K562 (cell line): ENCODE measurements at regions of chr11 and their contacts with region 1.

Region 1: GRCh38 chr11:67583247-67584204 is at the start of gene GSTP1:
- DNase-seq: peak; percentile 94 to 96 (median 94)
- ATAC-seq: peak; percentile 95
- H3K4me3 ChIP-seq: peak within 1 kb of the TSS; percentile 62
- H3K27ac ChIP-seq: peak within 1 kb of the TSS; percentile 89
- H3K4me1 ChIP-seq: peaks cover 33 to 49% of the 10 kb centered on the region in 2 experiments
- H3K27me3 ChIP-seq: no peaks in the 10 kb centered on the region
- CTCF ChIP-seq: peak; percentile 88 to 90 (median 89)
- EP300 ChIP-seq: no peak
- POLR2A ChIP-seq: peak; percentile 95
- RAD21 ChIP-seq: peak; percentile 68 to 70
- polyA plus RNA-seq, gene GSTP1: 739 to 1,204 TPM

Region 2: DNA sequence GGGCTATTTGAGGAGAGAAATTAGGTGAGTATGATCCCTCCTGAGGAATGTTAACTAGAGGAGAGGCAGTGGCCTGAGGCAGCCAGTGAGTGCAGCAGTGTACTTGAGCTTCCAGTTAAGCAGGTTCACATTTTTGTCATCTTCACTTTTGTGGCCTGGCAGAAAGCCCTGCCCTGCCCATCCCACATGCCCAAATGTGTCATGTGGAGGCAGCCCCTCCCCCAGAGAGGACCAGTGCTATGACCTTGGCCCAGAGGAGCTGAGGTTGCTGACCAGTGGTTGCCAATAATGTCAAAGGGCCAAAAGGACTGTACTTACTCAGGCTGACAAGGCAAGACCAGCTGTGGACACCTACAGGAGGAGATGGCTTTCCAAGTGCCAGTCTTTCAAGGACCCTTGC is 334.9 kb before region 1 on chr11:
- CTCF ChIA-PET with region 1: no interaction called
- POLR2A ChIA-PET with region 1: no interaction called
- in situ Hi-C with region 1: no loop called
- intact Hi-C with region 1: no loop called
- DNase-seq: no peak
- ATAC-seq: no peak
- H3K4me3 ChIP-seq: no peak overlapping the region
- H3K27ac ChIP-seq: no peak overlapping the region
- H3K4me1 ChIP-seq: peaks cover 0 to 7% of the 10 kb centered on the region in 2 experiments; a peak in 1 of 5 replicates
- H3K27me3 ChIP-seq: no peaks in the 10 kb centered on the region
- CTCF ChIP-seq: no peak
- EP300 ChIP-seq: no peak
- POLR2A ChIP-seq: no peak
- RAD21 ChIP-seq: no peak

Region 3: DNA sequence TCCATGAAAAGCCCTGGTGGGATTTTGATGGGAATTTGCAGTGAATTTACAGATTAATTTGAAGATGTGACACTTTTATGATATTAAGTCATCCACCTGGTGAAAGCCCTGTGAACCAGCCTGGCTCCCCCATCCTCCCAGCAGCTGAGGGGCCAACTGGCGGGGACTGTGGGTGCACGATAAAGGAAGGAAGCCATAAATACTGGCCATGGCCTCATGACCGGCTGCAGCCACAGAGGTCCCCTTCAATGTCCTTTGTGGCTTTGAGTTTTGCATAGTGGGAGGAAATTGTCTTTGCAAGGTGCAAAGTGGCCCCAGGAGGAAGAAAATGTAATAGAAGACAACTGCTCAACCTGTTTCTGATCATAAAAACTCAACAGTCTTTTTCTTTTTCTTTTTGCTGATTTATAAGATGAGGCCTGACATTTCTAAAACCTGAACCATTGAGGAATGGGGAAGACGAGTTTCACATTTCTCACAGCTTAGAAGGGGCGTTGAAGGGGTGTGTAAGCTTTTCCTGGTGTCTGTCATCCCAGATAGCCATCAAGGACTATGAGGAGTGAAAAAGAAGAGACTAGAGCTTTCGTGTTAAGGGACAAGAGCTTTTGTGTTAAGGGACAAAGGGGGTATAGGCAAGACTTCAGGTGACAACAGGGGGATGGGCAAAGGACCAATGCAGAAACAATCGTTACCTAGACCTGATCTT is 17.0 kb after region 1 on chr11:
- CTCF ChIA-PET with region 1: no interaction called
- POLR2A ChIA-PET with region 1: interaction called, 15 read pairs
- in situ Hi-C with region 1: no loop called
- intact Hi-C with region 1: loop called (anchors 1 kb)
- DNase-seq: peak in 2 of 4 experiments; percentile 65 to 89
- ATAC-seq: peak; percentile 89
- H3K4me3 ChIP-seq: no peak overlapping the region
- H3K27ac ChIP-seq: peak overlapping the region; percentile 59
- H3K4me1 ChIP-seq: peaks cover 45% of the 10 kb centered on the region in 2 experiments
- H3K27me3 ChIP-seq: no peaks in the 10 kb centered on the region
- CTCF ChIP-seq: no peak
- EP300 ChIP-seq: peak; percentile 85
- POLR2A ChIP-seq: no peak
- RAD21 ChIP-seq: 0 out of 4 replicates have a peak, but pooled peaks have one; percentile 20 to 30

Region 4: DNA sequence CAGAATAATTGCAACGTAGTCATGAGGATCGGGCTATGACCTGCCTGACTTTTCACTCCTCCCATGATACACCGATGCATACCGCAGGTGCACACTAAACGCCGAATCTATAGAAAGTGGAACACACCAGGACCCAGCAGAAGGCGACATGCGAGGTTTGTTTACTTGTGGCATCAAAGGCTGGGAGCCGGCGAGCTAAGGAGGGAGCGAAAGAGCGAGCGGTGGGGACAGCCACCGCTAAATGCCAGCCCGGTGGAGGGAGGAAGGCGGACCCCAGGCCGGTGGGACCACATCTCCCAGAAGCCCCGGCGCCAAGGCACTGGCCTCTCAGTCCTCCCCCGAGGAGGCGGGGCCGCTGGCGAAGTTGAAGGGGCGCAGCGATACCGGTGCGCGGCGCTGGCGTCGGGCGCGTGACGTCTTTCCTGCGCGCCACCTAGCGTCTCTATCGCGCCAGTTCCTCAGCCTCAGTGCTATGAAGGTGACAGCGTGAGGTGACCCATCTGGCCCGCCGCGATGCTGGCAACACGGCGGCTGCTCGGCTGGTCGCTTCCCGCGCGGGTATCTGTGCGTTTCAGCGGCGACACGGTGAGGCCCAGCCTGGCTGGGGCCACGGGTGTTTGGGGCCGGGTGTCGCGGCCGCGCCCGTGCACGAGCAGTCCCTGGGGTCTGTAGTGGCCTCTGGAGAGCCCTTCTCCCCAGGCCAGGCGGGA is 23.1 kb after region 1 on chr11 and contains the start of gene NDUFV1:
- CTCF ChIA-PET with region 1: interaction called, 3 read pairs
- POLR2A ChIA-PET with region 1: interaction called, 15 read pairs
- in situ Hi-C with region 1: no loop called
- intact Hi-C with region 1: loop called (anchors 1 kb)
- DNase-seq: peak; percentile 88 to 98 (median 92)
- ATAC-seq: peak; percentile 97
- H3K4me3 ChIP-seq: peak within 1 kb of the TSS; percentile 99
- H3K27ac ChIP-seq: peak within 1 kb of the TSS; percentile 83
- H3K4me1 ChIP-seq: peaks cover 28 to 63% of the 10 kb centered on the region in 2 experiments
- H3K27me3 ChIP-seq: no peaks in the 10 kb centered on the region
- CTCF ChIP-seq: peak; percentile 61 to 95 (median 78)
- EP300 ChIP-seq: peak; percentile 40; the same call in 1 of the 2 replicates
- POLR2A ChIP-seq: peak; percentile 89
- RAD21 ChIP-seq: peak; percentile 25 to 28; a peak in 1 of 4 replicates
- polyA plus RNA-seq, gene NDUFV1: 10.8 to 32.9 TPM

Region 5: GRCh38 chr11:67820081-67820480 is 236.6 kb after region 1 on chr11:
- CTCF ChIA-PET with region 1: no interaction called
- POLR2A ChIA-PET with region 1: no interaction called
- in situ Hi-C with region 1: no loop called
- intact Hi-C with region 1: no loop called
- DNase-seq: peak in 3 of 4 experiments; percentile 3 to 37 (median 4)
- ATAC-seq: no peak
- H3K4me3 ChIP-seq: no peak overlapping the region
- H3K27ac ChIP-seq: no peak overlapping the region
- H3K4me1 ChIP-seq: no peaks in the 10 kb centered on the region
- H3K27me3 ChIP-seq: peaks cover 0 to 9% of the 10 kb centered on the region in 2 experiments; a peak in 2 of 5 replicates
- CTCF ChIP-seq: no peak
- EP300 ChIP-seq: no peak
- POLR2A ChIP-seq: no peak
- RAD21 ChIP-seq: no peak